Spleen (tissue), 13 donors: ENCODE measurements at regions of chr1 and their contacts with region 1.

Region 1: DNA sequence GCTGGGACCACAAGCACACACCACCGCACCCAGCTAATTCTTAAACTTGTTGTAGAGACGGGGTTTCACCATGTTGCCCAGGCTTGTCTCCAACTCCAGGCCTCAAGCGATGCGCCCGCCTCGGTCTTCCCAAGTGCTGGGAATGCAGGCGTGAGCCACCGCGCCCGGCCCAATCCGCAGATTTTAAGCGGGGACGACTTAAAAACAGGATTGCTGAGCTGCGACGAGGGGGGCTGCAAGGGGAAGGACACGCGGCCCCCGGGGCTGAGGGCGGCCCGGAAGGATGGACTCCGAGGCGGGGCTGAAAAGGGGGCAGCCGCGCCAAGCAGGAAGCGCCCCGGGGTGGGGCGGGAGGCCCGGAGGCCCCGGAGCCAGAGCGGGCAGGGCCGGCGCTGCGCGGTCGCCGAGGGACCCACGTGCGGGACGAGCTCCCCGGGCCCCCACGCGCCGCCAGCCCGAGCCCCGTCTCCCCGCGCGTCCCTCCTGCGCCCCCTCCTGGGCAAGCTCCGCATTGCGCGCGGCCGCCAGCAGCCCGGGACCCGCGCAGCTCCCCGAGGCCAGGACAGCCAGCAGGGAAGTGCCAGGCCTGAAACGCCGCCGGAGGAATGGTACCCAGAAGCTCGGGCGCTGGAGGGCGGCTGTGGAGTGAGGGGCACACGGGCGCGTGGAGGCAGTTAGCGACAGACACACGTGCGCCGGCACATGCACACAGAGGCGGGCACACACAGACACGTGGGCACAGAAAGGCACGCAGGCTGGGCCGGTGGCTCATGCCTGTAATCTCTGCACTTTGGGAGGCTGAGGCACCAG is 5.5 kb upstream of the PRKCZ start:
- DNase-seq: peak; percentile 94
- H3K4me3 ChIP-seq: peak overlapping the region in 7 of 8 donors; percentile 8 to 58 (median 25)
- H3K27ac ChIP-seq: peak overlapping the region in 6 of 8 donors; percentile 17 to 40 (median 32)
- H3K4me1 ChIP-seq: peaks cover 33 to 56% (median 47%) of the 10 kb centered on the region in 6 donors
- H3K27me3 ChIP-seq: peaks cover 0 to 55% (median 12%) of the 10 kb centered on the region in 7 donors
- CTCF ChIP-seq: peak; percentile 77 to 96 (median 91)
- POLR2A ChIP-seq: no peak

Region 2: GRCh38 chr1:1943834-1944570 is 100.7 kb before region 1 on chr1:
- intact Hi-C with region 1: loop called (anchors 10 kb)
- DNase-seq: peak; percentile 92
- H3K4me3 ChIP-seq: peak overlapping the region in 3 of 8 donors; percentile 9 to 54 (median 19)
- H3K27ac ChIP-seq: no peak overlapping the region
- H3K4me1 ChIP-seq: peaks cover 0 to 18% (median 10%) of the 10 kb centered on the region in 6 donors
- H3K27me3 ChIP-seq: peaks cover 0 to 35% (median 0%) of the 10 kb centered on the region in 7 donors
- CTCF ChIP-seq: peak; percentile 76 to 96 (median 91)
- POLR2A ChIP-seq: no peak